ENCODE measurements at regions of chr1 and their contacts with region 1.

Region 1: GRCh38 chr1:34842952-34843371 is 16.6 kb downstream of the SMIM12 start:
- DNase-seq: no peak
- ATAC-seq: no peak
- H3K4me3 ChIP-seq: no peak overlapping the region
- H3K27ac ChIP-seq: no peak overlapping the region
- H3K4me1 ChIP-seq: no peaks in the 10 kb centered on the region
- H3K27me3 ChIP-seq: no peaks in the 10 kb centered on the region

Region 2: GRCh38 chr1:34792868-34793727 is 49.9 kb before region 1 on chr1 and contains the start of gene GJA4:
- intact Hi-C with region 1: loop called in 1 of 2 experiments (anchors 5 kb)
- DNase-seq: peak in 1 of 2 donors; percentile 85
- ATAC-seq: peak; percentile 30
- H3K4me3 ChIP-seq: peak within 1 kb of the TSS; percentile 52 to 66
- H3K27ac ChIP-seq: peak within 1 kb of the TSS; percentile 75 to 80
- H3K4me1 ChIP-seq: peaks cover 0 to 3% of the 10 kb centered on the region in 2 donors
- H3K27me3 ChIP-seq: no peaks in the 10 kb centered on the region
- total RNA-seq, gene GJA4: 45.4 to 49.2 TPM

Region 3: GRCh38 chr1:34825455-34826091 is 17.4 kb before region 1 on chr1:
- intact Hi-C with region 1: loop called in 1 of 2 experiments (anchors 1 kb)
- DNase-seq: no peak
- ATAC-seq: peak; percentile 87
- H3K4me3 ChIP-seq: no peak overlapping the region
- H3K27ac ChIP-seq: peak overlapping the region; percentile 60 to 68
- H3K4me1 ChIP-seq: peaks cover 4 to 5% of the 10 kb centered on the region in 2 donors
- H3K27me3 ChIP-seq: no peaks in the 10 kb centered on the region

Region 4: GRCh38 chr1:34896613-34897012 is 53.7 kb after region 1 on chr1:
- intact Hi-C with region 1: no loop called
- DNase-seq: no peak
- ATAC-seq: no peak
- H3K4me3 ChIP-seq: no peak overlapping the region
- H3K27ac ChIP-seq: no peak overlapping the region
- H3K4me1 ChIP-seq: peaks cover 0 to 6% of the 10 kb centered on the region in 2 donors
- H3K27me3 ChIP-seq: no peaks in the 10 kb centered on the region